Posterior cingulate gyrus (tissue), 11 donors: ENCODE measurements at regions of chr5 and their contacts with region 1.

Region 1: DNA sequence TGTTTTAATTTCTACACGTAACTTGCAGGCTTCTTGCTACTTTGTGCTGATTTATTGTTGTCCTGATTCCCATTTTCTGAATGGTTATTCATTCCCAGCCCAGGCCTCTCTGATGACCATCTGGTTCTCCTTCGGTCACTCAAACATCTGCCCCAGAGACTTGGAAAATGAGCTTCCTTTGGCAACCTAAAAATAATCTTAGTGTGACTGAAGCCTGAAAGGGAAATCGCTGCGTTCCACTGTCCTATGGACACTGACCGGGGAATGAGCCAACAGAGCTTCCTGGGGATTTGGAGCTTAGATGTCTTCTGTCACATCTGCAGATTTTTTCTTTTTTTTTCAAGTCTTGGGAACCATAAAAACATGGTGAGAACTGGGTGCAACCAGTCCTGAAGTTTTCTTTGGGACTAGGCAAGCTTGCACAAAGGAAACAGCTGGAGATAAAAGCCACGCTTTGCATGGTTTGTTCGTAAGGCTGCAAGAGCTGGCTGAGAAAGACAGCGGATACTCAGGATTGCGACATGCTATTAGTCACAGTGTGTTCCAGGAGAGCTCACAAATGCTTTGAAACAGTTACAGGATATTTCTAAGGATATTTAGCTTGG is 146.3 kb downstream of the GOLPH3 start:
- DNase-seq: peak in 2 of 10 donors; percentile 23 to 29

Region 2: DNA sequence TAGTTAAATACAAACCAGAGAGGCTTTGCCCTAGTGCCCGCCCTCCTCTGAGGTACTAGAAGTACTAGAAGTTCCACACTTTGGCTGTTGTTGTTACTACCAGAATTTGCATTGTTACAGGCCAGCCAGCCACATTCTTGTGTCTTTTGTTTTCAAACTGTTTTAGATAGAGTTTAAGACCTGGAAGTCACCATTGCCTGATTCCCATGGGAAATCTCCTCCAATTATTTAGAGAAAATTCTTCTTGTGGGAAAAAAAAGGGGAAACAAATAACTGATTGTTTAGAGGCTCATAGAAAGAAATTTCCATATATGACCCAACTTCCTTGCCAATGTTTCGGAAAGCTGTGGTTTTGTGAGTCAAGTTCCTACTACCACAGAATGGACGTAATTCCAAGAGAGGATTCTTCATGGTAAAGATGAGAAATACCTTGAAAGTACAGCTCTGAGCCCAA is 105.9 kb before region 1 on chr5:
- intact Hi-C with region 1: loop called (anchors 5 kb)
- DNase-seq: no peak